Left cardiac atrium (tissue), 4 donors: ENCODE measurements at regions of chr12 and their contacts with region 1.

Region 1: GRCh38 chr12:52879394-52880351 is 25.2 kb downstream of the KRT8 start:
- DNase-seq: peak; percentile 80
- ATAC-seq: peak; percentile 88

Region 2: GRCh38 chr12:52372216-52373154 is 507.2 kb before region 1 on chr12:
- intact Hi-C with region 1: loop called (anchors 2 to 5 kb)
- DNase-seq: peak; percentile 87
- ATAC-seq: peak; percentile 83 to 88

Region 3: GRCh38 chr12:52390739-52391617 is 488.7 kb before region 1 on chr12:
- intact Hi-C with region 1: loop called in 1 of 2 experiments (anchors 5 kb)
- DNase-seq: no peak
- ATAC-seq: peak; percentile 9 to 14

Region 4: GRCh38 chr12:52495389-52495788 is 384.3 kb before region 1 on chr12:
- intact Hi-C with region 1: no loop called
- DNase-seq: no peak
- ATAC-seq: peak; percentile 31 to 79

Region 5: DNA sequence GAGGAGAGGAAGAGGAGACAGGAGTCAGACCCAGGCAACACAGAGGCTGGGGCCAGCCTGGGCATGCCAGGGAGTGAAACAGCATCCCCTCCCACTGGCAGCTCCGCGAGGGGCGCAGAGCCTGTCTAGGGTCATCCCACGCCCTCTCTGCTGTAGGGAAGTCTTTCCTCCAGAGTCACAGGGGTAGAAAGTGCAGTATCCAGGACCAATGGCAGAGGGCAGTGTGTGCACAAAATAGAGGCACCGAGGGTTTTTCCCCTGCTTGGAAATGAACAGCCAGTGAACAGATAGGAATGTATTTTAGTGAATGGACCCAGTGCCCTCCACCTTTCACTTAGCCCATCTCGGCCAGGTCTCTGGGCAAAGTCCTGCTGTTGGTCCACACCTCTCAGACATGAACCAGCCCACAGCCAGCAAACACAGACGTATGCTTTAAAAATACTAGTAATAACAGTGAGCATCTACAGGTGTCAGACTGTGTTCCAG is 296.7 kb before region 1 on chr12:
- intact Hi-C with region 1: loop called (anchors 2 kb)
- DNase-seq: peak; percentile 41
- ATAC-seq: peak; percentile 83 to 88